ENCODE measurements at regions of chr14 and their contacts with region 1.

Region 1: GRCh38 chr14:90518941-90519256 is 122.1 kb downstream of the CALM1 start:
- DNase-seq: peak; percentile 64
- H3K4me3 Mint-ChIP-seq: no peak overlapping the region
- H3K27ac Mint-ChIP-seq: no peak overlapping the region
- H3K4me1 Mint-ChIP-seq: no peaks in the 10 kb centered on the region
- H3K27me3 Mint-ChIP-seq: no peaks in the 10 kb centered on the region

Region 2: DNA sequence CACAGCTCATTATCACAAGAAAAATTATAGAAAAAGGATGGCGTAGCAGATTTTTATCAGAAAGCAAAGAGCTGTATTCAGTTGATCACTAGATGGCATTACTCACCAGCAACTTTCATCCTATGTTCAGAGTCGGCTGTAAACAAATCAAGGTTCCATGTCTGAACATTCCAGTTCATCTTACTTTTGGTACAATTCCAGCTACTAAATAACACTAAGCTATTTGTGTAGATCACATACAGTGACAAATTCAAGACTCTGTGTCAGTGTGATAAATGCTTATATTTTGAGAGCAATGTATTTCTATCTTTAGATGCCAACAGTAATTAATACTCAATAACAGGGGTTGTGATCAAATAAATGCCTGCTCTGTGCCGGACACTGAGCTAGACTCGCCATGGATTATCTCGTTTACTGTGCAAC is 217.2 kb before region 1 on chr14:
- CTCF ChIA-PET with region 1: interaction called, 6 read pairs
- POLR2A ChIA-PET with region 1: no interaction called
- intact Hi-C with region 1: loop called (anchors 2 kb)
- DNase-seq: no peak
- H3K4me3 Mint-ChIP-seq: no peak overlapping the region
- H3K27ac Mint-ChIP-seq: no peak overlapping the region
- H3K4me1 Mint-ChIP-seq: peaks cover 10% of the 10 kb centered on the region
- H3K27me3 Mint-ChIP-seq: no peaks in the 10 kb centered on the region

Region 3: DNA sequence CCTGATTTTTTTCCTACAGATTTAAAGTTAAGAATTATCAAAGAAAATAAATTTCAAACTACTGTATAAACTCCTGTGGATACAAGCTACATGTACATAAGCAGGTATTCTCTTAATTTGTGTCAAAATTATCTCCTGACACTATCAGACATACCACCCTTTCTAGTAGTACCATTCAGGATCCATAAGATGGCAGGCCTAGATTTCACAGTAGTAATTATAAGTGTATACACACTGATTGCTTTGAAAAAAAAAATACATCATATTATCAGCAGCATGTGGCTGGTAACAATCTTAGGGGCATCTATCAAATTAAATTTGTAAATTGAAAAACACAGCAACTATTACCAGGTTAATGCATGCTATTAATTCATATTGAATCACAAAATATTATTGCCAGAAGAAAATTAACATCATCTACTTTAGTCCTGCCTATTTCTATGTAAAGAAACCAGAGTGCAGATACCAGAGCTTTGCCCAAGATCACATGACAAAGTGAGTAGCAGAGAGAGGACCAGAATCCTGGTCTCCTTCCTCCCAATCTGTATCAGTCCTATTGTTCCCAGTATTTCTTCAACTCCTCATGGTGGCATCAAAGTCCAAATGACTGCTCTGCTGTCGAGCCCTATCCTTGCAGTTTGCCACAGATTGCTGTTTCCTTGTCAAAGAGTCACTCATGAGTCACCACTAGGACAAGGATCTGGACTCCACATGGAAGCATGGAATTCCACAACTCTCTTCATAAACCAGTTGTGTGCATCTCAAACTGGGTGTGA is 149.8 kb before region 1 on chr14:
- CTCF ChIA-PET with region 1: no interaction called
- POLR2A ChIA-PET with region 1: no interaction called
- intact Hi-C with region 1: loop called (anchors 1 kb)
- DNase-seq: no peak
- H3K4me3 Mint-ChIP-seq: no peak overlapping the region
- H3K27ac Mint-ChIP-seq: no peak overlapping the region
- H3K4me1 Mint-ChIP-seq: no peaks in the 10 kb centered on the region
- H3K27me3 Mint-ChIP-seq: no peaks in the 10 kb centered on the region

Region 4: DNA sequence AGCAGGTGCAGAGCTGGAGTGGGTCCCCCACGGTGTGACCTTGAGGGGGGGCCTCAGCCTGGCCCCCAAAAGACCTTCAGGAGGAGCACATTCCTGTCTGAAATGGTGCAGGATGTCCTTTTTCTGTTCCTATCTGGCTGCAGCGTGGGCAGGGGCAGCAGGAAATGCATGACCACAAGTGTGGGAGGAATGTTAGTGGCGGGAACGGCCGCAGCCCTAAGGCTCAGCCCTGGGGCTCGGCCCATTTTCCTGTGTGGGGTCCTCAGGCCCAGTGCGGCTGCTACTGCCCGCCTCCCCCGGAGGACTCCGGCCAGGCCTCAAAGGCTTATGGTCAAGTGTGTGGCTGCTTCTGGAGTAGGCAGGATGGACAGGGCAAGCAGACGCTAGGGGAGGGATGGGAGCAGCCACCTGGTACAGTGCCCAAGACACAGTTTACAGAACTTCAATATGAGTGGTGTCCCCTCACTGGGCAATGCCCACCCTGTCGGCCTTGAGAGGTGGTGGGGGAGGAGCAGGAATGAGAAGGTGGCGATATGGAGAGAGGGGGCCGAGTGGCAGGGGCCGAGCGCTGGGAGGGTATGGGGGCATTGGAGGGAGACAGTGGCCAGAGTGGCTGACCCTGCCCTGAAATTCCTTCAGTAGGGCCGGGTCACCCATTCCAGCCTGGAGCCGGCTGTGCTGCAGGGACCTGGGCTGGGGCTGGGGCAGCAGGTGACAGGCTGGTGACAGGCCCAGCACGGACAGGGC is 15.4 kb after region 1 on chr14:
- CTCF ChIA-PET with region 1: no interaction called
- POLR2A ChIA-PET with region 1: no interaction called
- intact Hi-C with region 1: no loop called
- DNase-seq: no peak
- H3K4me3 Mint-ChIP-seq: no peak overlapping the region
- H3K27ac Mint-ChIP-seq: no peak overlapping the region
- H3K4me1 Mint-ChIP-seq: no peaks in the 10 kb centered on the region
- H3K27me3 Mint-ChIP-seq: no peaks in the 10 kb centered on the region

Measured in activated CD4-positive, alpha-beta memory T cell treated with anti-CD3 and anti-CD28 coated beads for 36 hours (primary cell).